ENCODE measurements at regions of chr7 and their contacts with region 1.

Region 1: GRCh38 chr7:95684037-95684436 is 87.7 kb upstream of the PDK4 start:
- DNase-seq: peak in 1 of 2 donors; percentile 14
- ATAC-seq: peak in 6 of 8 donors; percentile 31 to 75 (median 72)
- H3K4me3 ChIP-seq: no peak overlapping the region
- H3K27ac ChIP-seq: no peak overlapping the region
- H3K4me1 ChIP-seq: peaks cover 0 to 33% (median 3%) of the 10 kb centered on the region in 9 donors
- H3K27me3 ChIP-seq: no peaks in the 10 kb centered on the region
- CTCF ChIP-seq: peak; percentile 30 to 81 (median 61)

Region 2: GRCh38 chr7:95527033-95527775 is 156.8 kb before region 1 on chr7:
- intact Hi-C with region 1: loop called (anchors 1 to 5 kb)
- DNase-seq: peak in 1 of 2 donors; percentile 65
- ATAC-seq: peak; percentile 80 to 93 (median 86)
- H3K4me3 ChIP-seq: no peak overlapping the region
- H3K27ac ChIP-seq: no peak overlapping the region
- H3K4me1 ChIP-seq: peaks cover 0 to 17% (median 12%) of the 10 kb centered on the region in 9 donors
- H3K27me3 ChIP-seq: no peaks in the 10 kb centered on the region
- CTCF ChIP-seq: peak; percentile 82 to 96 (median 90)

Region 3: DNA sequence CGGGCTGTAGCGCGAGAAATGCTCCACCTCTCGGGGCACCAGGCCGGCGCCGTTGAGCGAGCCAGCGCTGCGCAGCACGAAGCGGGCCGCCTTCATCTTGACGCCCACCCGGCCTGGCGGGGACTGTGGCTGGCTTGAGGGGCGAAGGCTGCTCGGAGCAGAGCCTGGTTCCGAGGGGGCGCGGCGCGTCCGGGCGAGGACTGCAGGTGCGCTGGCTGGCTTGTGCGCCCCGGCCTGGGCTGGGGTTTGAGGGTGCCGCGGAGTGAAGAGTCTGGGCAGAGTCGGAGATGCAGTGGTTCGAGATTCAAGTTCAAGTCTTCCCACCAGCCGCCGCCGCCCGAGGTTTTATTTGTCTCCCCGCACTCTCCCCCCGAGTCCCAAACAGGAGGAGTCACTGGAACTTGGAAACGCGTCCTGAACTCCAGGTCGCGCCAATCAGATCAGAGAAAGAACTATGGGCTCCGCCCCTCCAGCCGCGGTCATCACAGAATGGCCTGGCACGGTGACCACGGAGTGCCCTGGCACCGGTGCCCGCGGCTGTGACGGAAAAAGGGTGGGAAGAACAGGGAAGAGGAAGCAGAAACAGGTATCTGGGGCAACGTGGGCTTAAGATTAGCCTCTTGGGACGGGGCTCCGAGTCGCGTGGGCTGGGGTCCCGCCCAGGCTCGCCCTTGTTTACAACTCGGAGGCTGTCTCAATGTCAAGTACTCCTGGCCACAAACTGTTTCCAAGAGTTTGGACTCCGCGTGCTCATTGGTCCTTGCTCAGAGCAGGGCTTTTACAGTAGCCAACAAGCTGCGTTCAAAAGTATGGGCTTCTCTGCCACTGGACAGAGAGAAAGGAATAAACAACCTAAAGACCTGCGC is 87.6 kb before region 1 on chr7 and contains the start of gene PDK4:
- intact Hi-C with region 1: loop called in 7 of 10 experiments (anchors 5 to 10 kb)
- DNase-seq: peak; percentile 93 to 95
- ATAC-seq: peak; percentile 87 to 98 (median 96)
- H3K4me3 ChIP-seq: peak within 1 kb of the TSS; percentile 47 to 91 (median 80)
- H3K27ac ChIP-seq: peak within 1 kb of the TSS; percentile 89 to 99 (median 94)
- H3K4me1 ChIP-seq: peaks cover 0 to 70% (median 51%) of the 10 kb centered on the region in 9 donors
- H3K27me3 ChIP-seq: no peaks in the 10 kb centered on the region
- CTCF ChIP-seq: no peak
- total RNA-seq, gene PDK4: 63.0 to 2,183 (median 269) TPM

Region 4: DNA sequence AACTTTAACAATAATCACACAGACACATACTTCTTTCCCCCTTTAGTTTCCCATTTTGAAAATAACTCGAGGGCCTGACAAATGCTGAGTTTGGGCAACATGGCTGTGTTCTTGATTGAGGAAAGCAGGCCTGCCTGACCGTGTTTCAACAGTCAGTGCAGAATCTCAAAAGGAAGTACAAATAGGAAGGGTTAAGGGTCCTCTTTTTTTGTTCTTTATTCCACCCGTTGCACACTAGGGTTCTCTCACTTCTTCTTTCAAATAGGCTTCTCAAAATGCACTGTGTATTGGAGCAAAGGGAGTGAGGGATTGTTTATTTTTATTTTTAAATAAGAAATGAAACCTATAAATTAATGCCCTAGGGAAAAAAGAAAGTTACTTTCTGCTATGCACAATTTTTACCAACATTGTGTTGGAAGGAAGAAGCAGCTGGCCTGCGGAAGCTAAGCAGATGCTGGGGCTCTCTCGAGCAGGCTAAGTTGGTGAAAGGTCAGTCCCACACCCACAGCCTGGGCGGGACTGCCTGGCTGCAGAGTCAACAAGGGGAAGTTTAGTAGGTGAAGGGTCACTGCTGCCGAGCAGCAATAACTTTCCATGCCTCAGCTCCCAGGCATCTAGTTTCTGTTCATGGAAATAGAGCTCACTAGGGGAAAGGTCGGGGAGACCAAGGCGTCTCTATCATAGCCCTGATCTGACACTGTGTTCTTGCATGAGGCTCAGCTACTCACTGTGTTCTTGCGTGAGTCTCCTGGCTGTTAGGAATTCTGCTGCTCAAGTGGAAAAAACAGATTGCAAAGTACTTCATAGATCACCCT is 75.5 kb before region 1 on chr7:
- intact Hi-C with region 1: loop called in 2 of 10 experiments (anchors 5 kb)
- DNase-seq: peak; percentile 89 to 95
- ATAC-seq: peak; percentile 97 to 100 (median 99)
- H3K4me3 ChIP-seq: peak overlapping the region in 6 of 10 donors; percentile 27 to 41 (median 35)
- H3K27ac ChIP-seq: peak overlapping the region; percentile 60 to 96 (median 88)
- H3K4me1 ChIP-seq: peaks cover 4 to 77% (median 46%) of the 10 kb centered on the region in 9 donors
- H3K27me3 ChIP-seq: no peaks in the 10 kb centered on the region
- CTCF ChIP-seq: no peak

Region 5: GRCh38 chr7:95636140-95636940 is 47.7 kb before region 1 on chr7:
- intact Hi-C with region 1: loop called in 1 of 10 experiments (anchors 5 kb)
- DNase-seq: no peak
- ATAC-seq: no peak
- H3K4me3 ChIP-seq: no peak overlapping the region
- H3K27ac ChIP-seq: peak overlapping the region in 1 of 10 donors; percentile 48
- H3K4me1 ChIP-seq: peaks cover 0 to 12% (median 0%) of the 10 kb centered on the region in 9 donors
- H3K27me3 ChIP-seq: no peaks in the 10 kb centered on the region
- CTCF ChIP-seq: no peak

Region 6: GRCh38 chr7:95723592-95724180 is 39.6 kb after region 1 on chr7:
- intact Hi-C with region 1: no loop called
- DNase-seq: peak in 1 of 2 donors; percentile 37
- ATAC-seq: peak in 7 of 8 donors; percentile 64 to 87 (median 77)
- H3K4me3 ChIP-seq: no peak overlapping the region
- H3K27ac ChIP-seq: no peak overlapping the region
- H3K4me1 ChIP-seq: no peaks in the 10 kb centered on the region
- H3K27me3 ChIP-seq: peaks cover 0 to 3% (median 0%) of the 10 kb centered on the region in 7 donors
- CTCF ChIP-seq: peak; percentile 18 to 64 (median 46)

Measured in heart right ventricle (tissue), 16 donors.